ENCODE measurements at regions of chr3 and their contacts with region 1.

Region 1: GRCh38 chr3:172918568-172919296 is 168.2 kb downstream of the ECT2 start:
- DNase-seq: no peak
- ATAC-seq: no peak
- H3K4me3 ChIP-seq: no peak overlapping the region
- H3K4me3 Mint-ChIP-seq: no peak overlapping the region
- H3K27ac ChIP-seq: no peak overlapping the region
- H3K27ac Mint-ChIP-seq: no peak overlapping the region
- H3K4me1 ChIP-seq: no peaks in the 10 kb centered on the region
- H3K4me1 Mint-ChIP-seq: no peaks in the 10 kb centered on the region
- H3K27me3 ChIP-seq: no peaks in the 10 kb centered on the region
- H3K27me3 Mint-ChIP-seq: no peaks in the 10 kb centered on the region
- CTCF ChIP-seq: no peak

Region 2: DNA sequence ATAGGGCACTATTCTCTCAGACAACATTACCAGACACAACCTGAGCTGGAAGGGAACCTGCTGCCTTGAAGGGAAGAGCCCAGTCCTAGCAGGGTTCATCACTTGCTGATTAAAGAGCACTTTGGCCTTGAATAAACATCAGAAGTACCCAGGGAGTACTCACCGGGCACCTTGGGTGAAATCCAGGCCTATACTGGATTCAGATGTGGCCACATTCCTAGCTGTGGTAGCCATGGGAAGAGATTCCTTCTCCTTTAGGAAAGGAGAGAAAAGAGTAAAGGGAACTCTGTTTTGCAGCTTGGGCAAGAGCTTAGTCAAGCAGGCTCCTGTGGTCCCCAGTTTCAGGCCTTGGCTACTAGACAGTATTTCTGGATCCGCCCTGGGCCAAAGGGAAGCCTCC is 27.3 kb after region 1 on chr3:
- CTCF ChIA-PET with region 1: no interaction called
- POLR2A ChIA-PET with region 1: no interaction called
- intact Hi-C with region 1: loop called in 1 of 2 experiments (anchors 1 kb)
- DNase-seq: no peak
- ATAC-seq: no peak
- H3K4me3 ChIP-seq: no peak overlapping the region
- H3K4me3 Mint-ChIP-seq: no peak overlapping the region
- H3K27ac ChIP-seq: no peak overlapping the region
- H3K27ac Mint-ChIP-seq: no peak overlapping the region
- H3K4me1 ChIP-seq: no peaks in the 10 kb centered on the region
- H3K4me1 Mint-ChIP-seq: no peaks in the 10 kb centered on the region
- H3K27me3 ChIP-seq: no peaks in the 10 kb centered on the region
- H3K27me3 Mint-ChIP-seq: no peaks in the 10 kb centered on the region
- CTCF ChIP-seq: no peak

Region 3: GRCh38 chr3:174229916-174230315 is 1311.2 kb after region 1 on chr3:
- CTCF ChIA-PET with region 1: no interaction called
- POLR2A ChIA-PET with region 1: no interaction called
- intact Hi-C with region 1: no loop called
- DNase-seq: no peak
- ATAC-seq: no peak
- H3K4me3 ChIP-seq: no peak overlapping the region
- H3K4me3 Mint-ChIP-seq: no peak overlapping the region
- H3K27ac ChIP-seq: no peak overlapping the region
- H3K27ac Mint-ChIP-seq: no peak overlapping the region
- H3K4me1 ChIP-seq: no peaks in the 10 kb centered on the region
- H3K4me1 Mint-ChIP-seq: no peaks in the 10 kb centered on the region
- H3K27me3 ChIP-seq: no peaks in the 10 kb centered on the region
- H3K27me3 Mint-ChIP-seq: no peaks in the 10 kb centered on the region
- CTCF ChIP-seq: no peak

Measured in CD4-positive, alpha-beta T cell (primary cell).